ENCODE measurements at regions of chr15 and their contacts with region 1.

Region 1: DNA sequence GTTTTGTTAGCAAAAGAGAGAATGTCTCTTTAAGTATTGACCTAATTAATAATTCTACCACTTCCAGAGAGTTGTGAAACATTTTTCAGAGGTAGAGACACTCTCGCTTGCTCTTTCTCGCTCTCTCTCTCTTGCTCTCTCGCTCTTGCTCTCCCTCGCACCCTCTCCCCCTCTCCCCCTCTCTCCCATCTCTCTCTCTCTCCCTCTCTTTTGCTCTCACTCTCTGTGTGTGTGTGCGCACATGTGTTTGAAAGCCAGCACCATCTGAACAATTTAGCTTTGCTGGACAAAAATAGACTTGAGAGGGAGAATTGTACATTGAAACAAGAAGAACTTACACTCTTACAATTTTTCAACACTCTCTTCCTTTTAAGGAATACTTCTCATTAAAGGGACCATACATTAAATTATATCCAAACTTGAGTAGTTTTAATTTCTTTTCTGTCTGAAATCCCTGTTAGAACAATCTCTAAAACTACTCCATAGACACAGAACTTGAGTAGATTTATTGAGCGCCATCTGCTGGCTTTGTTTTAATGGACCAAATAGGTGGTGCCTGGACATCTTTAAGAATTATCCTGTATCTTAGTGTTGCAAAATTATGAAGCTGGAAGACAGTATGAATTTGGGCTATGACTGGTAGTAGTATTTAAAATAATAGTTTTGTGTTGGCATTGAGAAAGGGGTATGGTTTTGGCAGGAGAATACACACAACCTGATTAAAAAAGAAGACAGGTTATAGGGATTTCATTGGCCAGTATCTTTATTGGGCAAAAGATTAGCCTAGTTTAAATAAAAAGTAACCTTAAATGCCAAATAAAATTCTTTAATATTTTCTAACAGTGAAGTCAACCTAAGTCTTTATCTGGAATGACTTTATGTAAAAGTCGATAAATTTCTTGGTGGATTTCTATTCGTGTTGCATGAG is 124.6 kb downstream of the AKAP13 start:
- DNase-seq: peak; percentile 24
- H3K4me3 ChIP-seq: no peak overlapping the region
- H3K27ac ChIP-seq: peak overlapping the region; percentile 9 to 54; a peak in 3 of 4 replicates
- H3K4me1 ChIP-seq: peaks cover 0 to 15% of the 10 kb centered on the region in 2 experiments; a peak in 2 of 4 replicates
- H3K27me3 ChIP-seq: no peaks in the 10 kb centered on the region
- CTCF ChIP-seq: peak; percentile 82
- EP300 ChIP-seq: no peak
- RAD21 ChIP-seq: peak; percentile 74

Region 2: GRCh38 chr15:85296615-85297402 is 208.2 kb before region 1 on chr15:
- CTCF ChIA-PET with region 1: interaction called, 21 read pairs
- POLR2A ChIA-PET with region 1: no interaction called
- DNase-seq: peak; percentile 70
- H3K4me3 ChIP-seq: peak overlapping the region; percentile 13 to 28; a peak in 2 of 4 replicates
- H3K27ac ChIP-seq: no peak overlapping the region
- H3K4me1 ChIP-seq: no peaks in the 10 kb centered on the region; a peak in 1 of 4 replicates
- H3K27me3 ChIP-seq: no peaks in the 10 kb centered on the region
- CTCF ChIP-seq: peak; percentile 78
- EP300 ChIP-seq: no peak
- RAD21 ChIP-seq: peak; percentile 94

Region 3: DNA sequence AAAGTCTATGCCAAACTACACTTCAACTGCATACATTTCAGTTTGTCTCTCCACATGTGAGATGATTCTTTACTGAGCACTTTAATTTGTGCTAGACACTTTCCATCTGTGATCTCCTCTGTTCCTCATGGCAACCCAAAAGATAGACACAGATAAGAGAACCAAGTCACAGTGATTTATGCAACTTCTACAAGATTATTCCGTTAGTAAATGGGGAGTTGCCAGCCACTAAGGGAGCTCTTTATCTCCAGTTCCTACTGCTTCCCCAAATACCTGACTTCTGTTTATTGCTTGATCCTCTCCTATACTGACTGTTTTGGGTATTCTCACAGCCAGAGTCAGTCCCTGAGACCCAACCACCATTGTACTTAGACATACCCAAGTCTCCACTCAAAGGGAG is 148.7 kb before region 1 on chr15:
- CTCF ChIA-PET with region 1: no interaction called
- POLR2A ChIA-PET with region 1: no interaction called
- DNase-seq: no peak
- H3K4me3 ChIP-seq: no peak overlapping the region
- H3K27ac ChIP-seq: no peak overlapping the region
- H3K4me1 ChIP-seq: peaks cover 2 to 19% of the 10 kb centered on the region in 2 experiments; a peak in 2 of 4 replicates
- H3K27me3 ChIP-seq: no peaks in the 10 kb centered on the region
- CTCF ChIP-seq: no peak
- EP300 ChIP-seq: no peak
- RAD21 ChIP-seq: no peak

Region 4: GRCh38 chr15:85479071-85479647 is 25.9 kb before region 1 on chr15:
- CTCF ChIA-PET with region 1: interaction called, 10 read pairs
- POLR2A ChIA-PET with region 1: no interaction called
- DNase-seq: peak; percentile 39
- H3K4me3 ChIP-seq: no peak overlapping the region
- H3K27ac ChIP-seq: peak overlapping the region; percentile 30 to 62; a peak in 3 of 4 replicates
- H3K4me1 ChIP-seq: peaks cover 20 to 40% of the 10 kb centered on the region in 2 experiments
- H3K27me3 ChIP-seq: no peaks in the 10 kb centered on the region
- CTCF ChIP-seq: no peak
- EP300 ChIP-seq: no peak
- RAD21 ChIP-seq: no peak

Region 5: GRCh38 chr15:85494048-85494793 is 10.8 kb before region 1 on chr15:
- CTCF ChIA-PET with region 1: interaction called, 97 read pairs
- POLR2A ChIA-PET with region 1: no interaction called
- DNase-seq: no peak
- H3K4me3 ChIP-seq: no peak overlapping the region
- H3K27ac ChIP-seq: peak overlapping the region; percentile 73 to 98
- H3K4me1 ChIP-seq: peaks cover 7 to 44% of the 10 kb centered on the region in 2 experiments; a peak in 3 of 4 replicates
- H3K27me3 ChIP-seq: no peaks in the 10 kb centered on the region
- CTCF ChIP-seq: no peak
- EP300 ChIP-seq: 0 out of 4 replicates have a peak, but pooled peaks of 1 of the 2 experiments have one; percentile 11
- RAD21 ChIP-seq: no peak